Activated T-helper 2 cell treated with anti-CD3 and anti-CD28 coated beads, Interferon-gamma antibody, Interleukin-2, Interleukin-4, amounts not matched to agents 10 μg/mL and 5 μg/mL and 100 μg/mL, durations not matched to agents 14 hours and 24 hours and 36 hours (primary cell): ENCODE measurements at regions of chr9 and their contacts with region 1.

Region 1: DNA sequence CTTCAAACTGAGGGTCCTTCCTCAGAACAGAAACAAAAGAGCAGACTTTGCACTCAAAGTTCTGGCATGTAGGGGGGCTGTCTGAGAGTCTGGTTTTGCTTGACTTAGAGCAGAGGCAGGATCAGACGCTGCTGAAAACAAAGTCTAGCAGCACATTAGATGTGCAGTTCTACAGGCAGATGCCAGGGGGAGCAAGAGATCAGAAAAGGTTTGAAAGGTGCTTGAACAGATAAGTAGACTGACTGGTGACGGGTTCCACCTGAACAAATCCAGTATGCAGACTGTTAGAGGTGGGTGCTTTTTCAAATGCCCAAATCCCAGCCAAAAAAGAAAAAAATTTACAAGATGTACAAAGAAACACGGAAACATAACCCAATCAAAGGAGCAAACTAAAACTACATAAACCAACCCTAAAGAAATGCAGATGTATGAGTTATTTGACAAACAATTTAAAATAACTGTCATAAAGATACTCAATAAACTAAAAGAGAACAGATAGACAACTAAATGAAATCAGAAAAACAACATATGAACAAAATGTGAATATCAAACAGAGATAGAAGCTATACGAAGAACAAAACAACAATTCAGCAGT is 194.7 kb upstream of the FREM1 start:
- DNase-seq: peak; percentile 14
- H3K4me3 Mint-ChIP-seq: no peak overlapping the region
- H3K27ac Mint-ChIP-seq: no peak overlapping the region
- H3K4me1 Mint-ChIP-seq: no peaks in the 10 kb centered on the region
- H3K27me3 Mint-ChIP-seq: peaks cover 8% of the 10 kb centered on the region

Region 2: GRCh38 chr9:15135164-15135792 is 30.4 kb after region 1 on chr9:
- intact Hi-C with region 1: loop called (anchors 1 kb)
- DNase-seq: peak; percentile 33
- H3K4me3 Mint-ChIP-seq: no peak overlapping the region
- H3K27ac Mint-ChIP-seq: no peak overlapping the region
- H3K4me1 Mint-ChIP-seq: peaks cover 10% of the 10 kb centered on the region
- H3K27me3 Mint-ChIP-seq: no peaks in the 10 kb centered on the region

Region 3: DNA sequence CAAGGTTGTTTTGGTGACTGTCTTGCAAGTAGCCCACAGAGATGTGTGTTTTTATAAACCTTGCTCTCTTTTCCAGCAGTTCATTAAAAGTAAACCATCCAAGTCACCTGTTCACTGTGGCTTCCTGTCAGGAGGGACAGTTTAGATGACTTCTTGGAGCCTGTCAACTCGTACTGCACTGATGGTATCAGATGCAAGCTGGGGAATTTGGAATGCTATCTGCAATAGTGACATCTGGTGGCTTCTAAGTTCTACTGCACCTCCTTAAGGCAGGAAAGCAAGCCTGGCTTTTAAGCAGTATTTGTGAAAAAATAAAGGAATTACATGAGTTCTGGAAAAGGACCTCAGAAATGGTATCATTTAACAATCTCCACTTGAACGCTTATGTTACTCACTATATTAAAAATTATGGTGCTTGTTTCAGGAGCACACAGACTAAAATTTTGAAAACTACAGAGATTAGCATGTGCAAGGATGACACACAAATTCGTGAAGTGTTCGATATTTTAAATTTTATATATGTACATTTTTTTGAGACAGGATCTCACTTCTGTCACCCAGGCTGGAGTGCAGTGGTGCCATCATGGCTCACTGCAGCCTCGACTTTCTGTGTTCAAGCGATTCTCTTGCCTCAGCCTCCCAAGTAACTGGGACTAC is 38.1 kb after region 1 on chr9:
- intact Hi-C with region 1: loop called (anchors 2 kb)
- DNase-seq: no peak
- H3K4me3 Mint-ChIP-seq: no peak overlapping the region
- H3K27ac Mint-ChIP-seq: no peak overlapping the region
- H3K4me1 Mint-ChIP-seq: no peaks in the 10 kb centered on the region
- H3K27me3 Mint-ChIP-seq: peaks cover 10% of the 10 kb centered on the region